ENCODE measurements at regions of chr3 and their contacts with region 1.

Region 1: DNA sequence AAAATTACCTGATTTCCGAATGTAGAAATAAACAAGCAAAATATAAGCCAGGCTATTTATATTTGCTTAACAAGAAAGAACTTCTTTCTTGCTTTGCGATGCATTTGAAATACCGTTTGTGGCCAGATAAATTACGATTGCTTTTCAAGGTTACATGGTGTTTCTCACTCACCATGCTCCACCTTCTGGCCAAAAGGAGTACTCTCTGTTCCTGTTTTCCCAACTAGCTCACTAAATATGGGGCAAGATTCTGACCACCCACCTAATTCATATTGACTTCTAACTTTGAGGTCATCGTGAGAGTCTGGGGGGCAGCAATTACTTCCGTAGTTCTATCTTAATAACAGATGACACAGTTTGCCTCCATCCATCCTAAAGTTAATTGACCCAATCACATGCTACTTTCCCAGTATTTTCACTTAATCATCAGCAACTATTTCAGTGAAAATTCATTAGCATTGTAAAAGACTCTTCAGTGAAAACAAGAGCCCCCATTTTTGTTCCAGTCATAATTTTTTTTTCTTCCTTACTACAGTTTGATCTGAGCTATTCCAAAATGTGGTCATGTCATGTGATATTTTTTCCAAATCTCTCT is 25.9 kb downstream of the ACP3 start:
- DNase-seq: no peak
- ATAC-seq: peak; percentile 90
- H3K4me3 ChIP-seq: no peak overlapping the region
- H3K27ac ChIP-seq: no peak overlapping the region
- H3K4me1 ChIP-seq: peaks cover 11% of the 10 kb centered on the region
- H3K27me3 ChIP-seq: no peaks in the 10 kb centered on the region
- CTCF ChIP-seq: peak; percentile 83

Region 2: GRCh38 chr3:132180337-132180791 is 162.8 kb before region 1 on chr3:
- intact Hi-C with region 1: no loop called
- DNase-seq: no peak
- ATAC-seq: peak; percentile 59
- H3K4me3 ChIP-seq: no peak overlapping the region
- H3K27ac ChIP-seq: no peak overlapping the region
- H3K4me1 ChIP-seq: no peaks in the 10 kb centered on the region
- H3K27me3 ChIP-seq: no peaks in the 10 kb centered on the region
- CTCF ChIP-seq: peak; percentile 50

Region 3: GRCh38 chr3:132256989-132257388 is 86.1 kb before region 1 on chr3:
- intact Hi-C with region 1: loop called (anchors 5 kb)
- DNase-seq: no peak
- ATAC-seq: peak; percentile 72
- H3K4me3 ChIP-seq: no peak overlapping the region
- H3K27ac ChIP-seq: no peak overlapping the region
- H3K4me1 ChIP-seq: no peaks in the 10 kb centered on the region
- H3K27me3 ChIP-seq: no peaks in the 10 kb centered on the region
- CTCF ChIP-seq: peak; percentile 46